PC-3 (cell line): ENCODE measurements at regions of chr5 and their contacts with region 1.

Region 1: GRCh38 chr5:137923856-137924255 is 34.6 kb downstream of the PKD2L2 start:
- DNase-seq: no peak
- ATAC-seq: no peak
- H3K4me3 ChIP-seq: no peak overlapping the region
- H3K27ac ChIP-seq: no peak overlapping the region
- H3K4me1 ChIP-seq: no peaks in the 10 kb centered on the region
- H3K27me3 ChIP-seq: no peaks in the 10 kb centered on the region
- CTCF ChIP-seq: no peak

Region 2: DNA sequence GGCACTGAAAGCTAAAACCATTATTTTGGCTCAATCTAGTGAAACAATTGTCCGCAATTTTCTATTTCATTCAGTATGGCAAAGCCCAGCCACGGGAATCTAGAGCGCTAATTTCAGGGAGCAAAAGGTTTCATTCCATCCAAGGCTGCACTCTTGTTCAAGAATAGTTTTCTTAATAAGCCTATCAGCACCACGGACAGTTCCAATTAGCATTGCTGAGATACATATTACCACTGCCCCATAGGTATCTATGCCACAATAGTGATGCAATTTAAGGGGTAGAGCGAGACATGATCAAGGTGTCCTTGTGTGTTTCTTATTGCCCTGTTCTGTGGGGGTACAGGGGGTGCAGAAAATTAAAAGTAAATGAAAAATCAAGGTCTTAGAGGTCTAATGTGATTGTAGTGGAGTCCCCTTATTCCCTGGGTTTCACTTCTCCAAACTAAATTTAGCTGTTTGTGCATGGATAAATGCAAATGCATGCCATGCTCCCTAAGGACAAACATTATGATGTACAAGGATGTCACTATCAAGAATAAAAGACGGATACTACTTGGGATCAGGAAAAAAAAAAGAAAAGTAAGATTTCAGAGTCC is 470.3 kb before region 1 on chr5:
- CTCF ChIA-PET with region 1: no interaction called
- POLR2A ChIA-PET with region 1: no interaction called
- intact Hi-C with region 1: no loop called
- DNase-seq: peak; percentile 59
- ATAC-seq: peak; percentile 46; the same call in 1 of the 2 replicates
- H3K4me3 ChIP-seq: no peak overlapping the region
- H3K27ac ChIP-seq: no peak overlapping the region
- H3K4me1 ChIP-seq: no peaks in the 10 kb centered on the region
- H3K27me3 ChIP-seq: no peaks in the 10 kb centered on the region
- CTCF ChIP-seq: no peak

Region 3: DNA sequence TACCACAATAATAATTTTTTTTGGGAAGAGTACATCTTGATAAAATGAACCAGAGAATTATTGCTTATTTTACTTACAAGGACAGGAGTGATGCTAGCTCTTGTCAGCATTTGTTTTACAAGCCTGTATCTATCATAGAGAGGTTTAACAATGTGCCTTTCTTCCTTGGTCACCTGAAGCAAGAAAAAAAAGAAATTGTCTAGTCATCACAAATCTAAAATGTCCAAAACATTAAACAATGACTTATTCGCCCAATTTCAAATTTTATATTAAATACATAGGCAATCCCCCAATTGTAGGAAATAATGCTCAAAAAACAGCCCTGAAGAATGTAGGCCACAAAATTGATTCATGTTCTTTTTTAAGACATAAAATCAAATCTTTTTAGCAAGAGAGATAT is 22.0 kb after region 1 on chr5:
- CTCF ChIA-PET with region 1: interaction called, 11 read pairs
- POLR2A ChIA-PET with region 1: no interaction called
- intact Hi-C with region 1: no loop called
- DNase-seq: no peak
- ATAC-seq: no peak
- H3K4me3 ChIP-seq: no peak overlapping the region
- H3K27ac ChIP-seq: no peak overlapping the region
- H3K4me1 ChIP-seq: no peaks in the 10 kb centered on the region
- H3K27me3 ChIP-seq: no peaks in the 10 kb centered on the region
- CTCF ChIP-seq: no peak